GM12878 (cell line): ENCODE measurements at regions of chr1 and their contacts with region 1.

Region 1: GRCh38 chr1:193031438-193031837 is 27.7 kb downstream of the UCHL5 start:
- DNase-seq: no peak
- ATAC-seq: peak; percentile 84
- H3K4me3 ChIP-seq: no peak overlapping the region
- H3K27ac ChIP-seq: no peak overlapping the region
- H3K4me1 ChIP-seq: no peaks in the 10 kb centered on the region
- H3K27me3 ChIP-seq: no peaks in the 10 kb centered on the region
- CTCF ChIP-seq: peak in 2 of 3 experiments; percentile 24; a peak in 3 of 6 replicates
- EP300 ChIP-seq: no peak
- POLR2A ChIP-seq: no peak
- RAD21 ChIP-seq: 0 out of 2 replicates have a peak, but pooled peaks have one; percentile 7

Region 2: GRCh38 chr1:192826791-192827477 is 204.5 kb before region 1 on chr1:
- CTCF ChIA-PET with region 1: no interaction called
- POLR2A ChIA-PET with region 1: no interaction called
- RAD21 ChIA-PET with region 1: no interaction called
- SMC1A ChIA-PET with region 1: no interaction called
- in situ Hi-C with region 1: no loop called
- intact Hi-C with region 1: no loop called
- DNase-seq: no peak
- ATAC-seq: peak; percentile 51
- H3K4me3 ChIP-seq: no peak overlapping the region
- H3K27ac ChIP-seq: no peak overlapping the region
- H3K4me1 ChIP-seq: no peaks in the 10 kb centered on the region
- H3K27me3 ChIP-seq: peaks cover 0 to 1% of the 10 kb centered on the region in 2 experiments; a peak in 1 of 4 replicates
- CTCF ChIP-seq: no peak
- EP300 ChIP-seq: no peak
- POLR2A ChIP-seq: no peak
- RAD21 ChIP-seq: no peak

Region 3: GRCh38 chr1:192936313-192937018 is 95.0 kb before region 1 on chr1:
- CTCF ChIA-PET with region 1: no interaction called
- POLR2A ChIA-PET with region 1: no interaction called
- RAD21 ChIA-PET with region 1: no interaction called
- SMC1A ChIA-PET with region 1: no interaction called
- in situ Hi-C with region 1: no loop called
- intact Hi-C with region 1: no loop called
- DNase-seq: no peak
- ATAC-seq: peak; percentile 74
- H3K4me3 ChIP-seq: no peak overlapping the region
- H3K27ac ChIP-seq: no peak overlapping the region
- H3K4me1 ChIP-seq: no peaks in the 10 kb centered on the region; the same call in 1 of the 2 replicates
- H3K27me3 ChIP-seq: no peaks in the 10 kb centered on the region
- CTCF ChIP-seq: no peak
- EP300 ChIP-seq: no peak
- POLR2A ChIP-seq: no peak
- RAD21 ChIP-seq: no peak

Region 4: DNA sequence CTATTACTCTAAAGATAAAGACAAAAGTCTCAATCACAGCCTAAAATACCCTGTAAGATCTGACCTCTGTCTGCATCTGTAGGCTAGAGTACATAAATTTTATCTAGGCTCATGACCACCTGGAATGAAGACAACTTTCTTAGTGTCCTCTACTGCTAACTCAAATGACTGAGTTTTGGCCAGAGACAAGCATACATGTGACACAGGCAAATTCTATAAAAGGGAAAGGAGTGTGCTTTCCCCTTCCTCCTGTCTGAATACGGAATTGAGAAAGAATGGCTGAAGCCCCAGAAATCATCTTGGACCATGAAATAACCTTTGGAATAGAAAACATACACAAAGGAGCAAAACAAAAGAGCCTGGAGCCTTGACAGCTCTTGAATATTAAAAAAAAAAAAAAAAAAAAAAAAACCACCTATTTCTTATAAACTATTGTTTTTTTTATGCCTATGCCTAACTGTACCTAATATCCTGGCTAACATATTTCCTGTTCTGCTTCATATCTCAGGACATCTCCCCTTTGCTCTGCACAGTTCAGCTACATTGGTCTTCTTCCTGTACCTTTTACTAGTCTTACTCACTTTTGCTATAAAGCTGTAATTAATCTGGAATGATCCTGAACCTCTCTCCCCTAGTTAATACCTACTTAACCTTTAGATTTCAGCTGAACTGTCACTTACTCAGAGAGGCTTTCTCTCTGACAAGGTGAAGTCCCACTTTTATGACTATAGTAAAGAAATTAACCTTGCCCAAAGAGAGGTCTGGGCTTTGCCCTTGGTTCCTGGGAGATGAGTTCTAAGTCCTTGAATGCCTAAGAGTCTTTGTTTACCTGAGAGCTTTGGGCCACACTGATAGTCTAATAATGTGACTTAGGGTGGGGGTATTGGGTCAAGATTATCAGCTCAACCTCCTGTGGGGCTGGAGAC is 11.6 kb after region 1 on chr1:
- CTCF ChIA-PET with region 1: interaction called, 6 read pairs
- POLR2A ChIA-PET with region 1: no interaction called
- RAD21 ChIA-PET with region 1: interaction called, 3 read pairs
- SMC1A ChIA-PET with region 1: interaction called, 10 read pairs
- in situ Hi-C with region 1: no loop called
- intact Hi-C with region 1: no loop called
- DNase-seq: no peak
- ATAC-seq: peak; percentile 32
- H3K4me3 ChIP-seq: no peak overlapping the region
- H3K27ac ChIP-seq: no peak overlapping the region
- H3K4me1 ChIP-seq: no peaks in the 10 kb centered on the region
- H3K27me3 ChIP-seq: no peaks in the 10 kb centered on the region
- CTCF ChIP-seq: no peak
- EP300 ChIP-seq: no peak
- POLR2A ChIP-seq: no peak
- RAD21 ChIP-seq: no peak

Region 5: DNA sequence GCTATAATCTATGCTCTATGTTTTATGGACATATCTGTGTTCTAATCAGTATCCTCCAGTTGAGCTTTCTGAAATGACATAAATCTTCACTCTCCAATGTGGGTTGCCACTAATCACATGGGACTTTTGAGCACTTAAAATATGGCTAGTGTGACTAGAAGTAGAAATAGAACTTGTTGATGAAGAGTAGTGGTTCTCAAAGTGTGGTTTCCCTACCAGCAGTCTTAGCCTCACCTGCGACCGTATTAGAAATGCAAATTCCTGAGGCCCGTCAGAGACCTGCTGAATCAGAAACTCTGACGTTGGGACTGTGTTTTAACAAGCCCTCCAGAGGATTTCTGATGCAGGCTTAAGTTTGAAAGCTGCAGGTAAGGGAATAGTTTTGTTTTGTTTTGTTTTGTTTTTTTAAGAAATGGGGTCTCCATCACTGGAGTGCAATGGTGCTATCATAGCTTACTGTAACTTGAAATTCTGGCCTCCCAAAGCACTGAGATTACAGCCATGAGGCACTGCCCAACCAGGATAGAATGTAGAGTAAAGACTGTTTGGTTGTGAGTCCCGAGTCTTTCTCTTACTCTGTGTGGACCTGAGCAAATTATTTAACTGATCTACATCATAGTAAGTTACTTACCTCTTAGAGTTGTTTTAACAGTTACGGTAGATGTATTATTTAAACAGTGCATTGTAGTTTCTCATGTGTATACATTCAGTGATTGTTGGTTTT is 52.1 kb after region 1 on chr1:
- CTCF ChIA-PET with region 1: no interaction called
- POLR2A ChIA-PET with region 1: no interaction called
- RAD21 ChIA-PET with region 1: no interaction called
- SMC1A ChIA-PET with region 1: no interaction called
- in situ Hi-C with region 1: no loop called
- intact Hi-C with region 1: no loop called
- DNase-seq: peak; percentile 47
- ATAC-seq: peak; percentile 92
- H3K4me3 ChIP-seq: no peak overlapping the region
- H3K27ac ChIP-seq: peak overlapping the region; percentile 56
- H3K4me1 ChIP-seq: peaks cover 11% of the 10 kb centered on the region; the same call in 1 of the 2 replicates
- H3K27me3 ChIP-seq: no peaks in the 10 kb centered on the region
- CTCF ChIP-seq: no peak
- EP300 ChIP-seq: peak; percentile 66 to 78; a peak in 3 of 4 replicates
- POLR2A ChIP-seq: no peak
- RAD21 ChIP-seq: no peak